ENCODE measurements at regions of chr5 and their contacts with region 1.

Region 1: GRCh38 chr5:140362860-140363630 is 3.1 kb downstream of the SLC4A9 start:
- DNase-seq: peak; percentile 93
- CTCF ChIP-seq: peak; percentile 96

Region 2: GRCh38 chr5:140175367-140176030 is 187.5 kb before region 1 on chr5:
- in situ Hi-C with region 1: no loop called
- DNase-seq: peak; percentile 78
- CTCF ChIP-seq: peak; percentile 21

Region 3: DNA sequence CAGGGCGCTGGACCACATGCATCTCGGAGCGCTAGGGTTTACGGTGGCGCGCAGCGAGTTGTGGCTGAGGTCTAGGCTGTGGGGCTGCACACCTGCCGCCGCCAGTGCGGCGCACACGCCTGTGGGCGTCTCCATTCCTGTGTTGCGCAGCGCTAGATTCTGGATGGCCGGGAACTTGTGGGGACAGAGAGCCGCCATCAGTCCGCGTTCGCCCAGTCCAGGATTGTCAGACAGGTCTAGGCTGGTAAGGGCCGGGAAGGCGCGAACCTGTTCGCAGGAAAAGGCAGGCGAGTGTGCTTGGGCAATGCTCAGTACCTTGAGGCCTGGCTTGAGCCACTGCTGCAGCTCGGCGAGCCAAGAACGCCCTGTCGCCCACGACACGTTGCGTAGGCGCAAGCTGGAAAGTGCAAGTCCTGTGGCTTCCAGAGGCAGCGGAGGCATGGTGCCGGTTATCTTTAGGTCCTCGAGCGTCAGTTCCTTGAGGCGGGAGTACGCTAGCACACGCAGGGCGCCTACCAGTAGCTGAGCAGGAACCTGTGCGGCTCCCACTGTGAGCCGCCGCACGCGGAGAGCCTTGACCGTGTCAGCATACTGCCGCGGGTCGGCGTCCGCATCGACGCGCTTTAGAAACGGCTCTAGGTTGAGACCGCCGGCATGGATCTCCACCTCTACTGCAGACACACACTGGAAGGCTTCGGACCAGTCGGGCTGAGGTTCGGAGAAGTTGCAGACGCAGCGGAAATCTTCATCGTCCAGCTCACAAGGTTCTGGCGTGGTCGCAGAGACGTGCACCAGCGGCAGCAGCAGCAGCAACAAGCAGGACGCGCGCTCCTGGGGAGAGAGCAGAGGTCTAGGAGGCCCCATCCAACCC is 269.3 kb after region 1 on chr5:
- in situ Hi-C with region 1: loop called (anchors 5 kb)
- DNase-seq: peak; percentile 68
- CTCF ChIP-seq: no peak

Region 4: DNA sequence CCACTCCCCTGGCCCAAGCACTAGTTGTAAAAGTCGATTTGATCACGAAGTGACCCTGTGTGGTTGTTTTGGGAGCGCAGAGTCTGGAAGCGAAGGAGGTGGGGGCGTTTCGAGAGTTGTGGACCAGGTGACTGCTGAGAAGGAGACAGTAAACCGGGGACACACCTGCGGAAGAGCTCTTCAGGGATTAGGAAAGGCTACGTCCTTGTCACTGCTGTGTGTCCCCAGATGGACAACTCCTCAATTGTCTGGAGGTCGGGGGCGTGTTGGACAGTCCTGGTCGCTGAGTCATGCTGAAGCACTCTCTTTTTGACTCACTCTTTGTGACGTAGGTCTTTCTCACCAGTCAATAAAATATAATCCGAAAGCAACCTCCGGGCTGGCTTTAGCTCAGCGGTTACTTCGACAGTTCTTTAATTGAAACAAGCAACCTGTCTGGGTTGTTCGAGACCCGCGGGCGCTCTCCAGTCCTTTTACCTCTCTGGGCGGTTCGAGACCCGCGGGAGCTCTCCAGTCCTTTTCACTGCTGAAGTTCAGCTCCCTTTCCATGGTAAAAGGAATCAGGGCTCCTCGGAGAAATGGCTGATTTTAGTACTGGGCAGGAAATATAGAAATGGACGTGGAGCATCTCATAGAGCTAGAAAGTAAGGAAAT is 348.0 kb after region 1 on chr5:
- in situ Hi-C with region 1: loop called (anchors 10 kb)
- DNase-seq: peak; percentile 83
- CTCF ChIP-seq: no peak

Region 5: GRCh38 chr5:141105350-141105749 is 742.3 kb after region 1 on chr5:
- in situ Hi-C with region 1: no loop called
- DNase-seq: no peak
- CTCF ChIP-seq: no peak

Measured in GM13976 (cell line).